ENCODE measurements at regions of chr10 and their contacts with region 1.

Region 1: DNA sequence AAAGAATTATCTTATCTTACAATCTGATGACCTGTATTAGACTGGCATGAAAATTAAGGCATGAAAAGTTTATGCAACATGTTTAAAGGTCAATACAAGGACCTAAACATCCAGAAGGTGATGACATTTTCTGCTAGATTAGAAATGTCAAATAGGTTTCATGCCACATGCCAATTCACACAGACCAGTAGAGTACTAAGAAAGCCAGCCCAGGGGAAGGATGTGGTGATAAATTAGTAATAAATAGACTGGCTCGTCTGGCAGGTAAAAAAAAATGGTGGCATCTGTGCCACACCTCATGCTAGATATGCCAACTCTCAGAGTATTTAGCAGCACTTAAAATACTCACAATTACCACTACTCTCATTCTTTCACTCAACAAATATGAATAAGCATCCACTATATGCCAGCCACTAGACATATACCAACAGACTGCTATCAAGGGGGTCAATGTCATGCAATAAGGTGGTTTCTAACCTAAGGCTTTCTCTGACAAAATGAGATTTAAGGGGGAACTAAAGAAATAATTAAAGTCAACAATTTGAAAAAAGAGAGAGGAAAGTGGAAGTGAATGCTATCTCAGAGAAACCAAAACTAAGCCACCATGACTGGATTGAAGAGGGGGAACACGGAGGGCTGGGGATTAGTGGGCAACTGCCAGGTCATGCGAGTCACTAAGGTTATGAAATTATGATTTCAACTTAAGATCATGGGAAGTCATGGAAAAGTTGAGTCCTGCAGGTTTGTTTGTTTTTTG is 83.5 kb downstream of the SGMS1 start:
- DNase-seq: peak; percentile 70
- H3K4me3 Mint-ChIP-seq: peak overlapping the region; percentile 57
- H3K27ac Mint-ChIP-seq: peak overlapping the region; percentile 89
- H3K4me1 Mint-ChIP-seq: peaks cover 86% of the 10 kb centered on the region
- H3K27me3 Mint-ChIP-seq: no peaks in the 10 kb centered on the region

Region 2: GRCh38 chr10:49538381-49539319 is 1001.6 kb before region 1 on chr10 and contains the start of gene ERCC6:
- CTCF ChIA-PET with region 1: no interaction called
- intact Hi-C with region 1: loop called (anchors 5 kb)
- DNase-seq: peak; percentile 97
- H3K4me3 Mint-ChIP-seq: peak within 1 kb of the TSS; percentile 90
- H3K27ac Mint-ChIP-seq: peak within 1 kb of the TSS; percentile 92
- H3K4me1 Mint-ChIP-seq: peaks cover 34% of the 10 kb centered on the region
- H3K27me3 Mint-ChIP-seq: peaks cover 14% of the 10 kb centered on the region
- total RNA-seq, gene ERCC6: 14.2 to 16.2 TPM

Region 3: DNA sequence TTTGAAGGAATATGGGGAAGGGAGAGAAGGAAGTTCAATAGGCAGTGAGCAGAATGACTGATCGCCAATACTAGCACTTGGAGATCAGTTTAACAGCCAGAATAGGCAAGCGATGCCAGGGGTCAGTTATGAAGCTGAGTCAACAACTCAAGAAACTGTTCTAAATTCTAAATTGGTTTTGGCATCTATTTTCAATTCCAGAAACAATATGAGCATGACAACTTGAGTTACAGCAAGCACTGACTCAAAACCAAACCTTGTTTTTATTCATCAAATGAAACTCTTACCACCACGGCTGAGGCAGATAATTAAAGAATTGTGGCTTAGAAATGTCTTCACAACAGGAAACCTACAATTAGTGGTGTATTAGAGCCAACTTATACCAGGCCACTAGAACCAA is 108.5 kb before region 1 on chr10:
- CTCF ChIA-PET with region 1: no interaction called
- intact Hi-C with region 1: loop called (anchors 1 kb)
- DNase-seq: peak; percentile 45
- H3K4me3 Mint-ChIP-seq: no peak overlapping the region
- H3K27ac Mint-ChIP-seq: peak overlapping the region; percentile 39
- H3K4me1 Mint-ChIP-seq: peaks cover 33% of the 10 kb centered on the region
- H3K27me3 Mint-ChIP-seq: no peaks in the 10 kb centered on the region

Region 4: GRCh38 chr10:50614444-50615137 is 74.3 kb after region 1 on chr10:
- CTCF ChIA-PET with region 1: no interaction called
- intact Hi-C with region 1: no loop called
- DNase-seq: peak; percentile 33
- H3K4me3 Mint-ChIP-seq: no peak overlapping the region
- H3K27ac Mint-ChIP-seq: no peak overlapping the region
- H3K4me1 Mint-ChIP-seq: peaks cover 56% of the 10 kb centered on the region
- H3K27me3 Mint-ChIP-seq: no peaks in the 10 kb centered on the region

Region 5: DNA sequence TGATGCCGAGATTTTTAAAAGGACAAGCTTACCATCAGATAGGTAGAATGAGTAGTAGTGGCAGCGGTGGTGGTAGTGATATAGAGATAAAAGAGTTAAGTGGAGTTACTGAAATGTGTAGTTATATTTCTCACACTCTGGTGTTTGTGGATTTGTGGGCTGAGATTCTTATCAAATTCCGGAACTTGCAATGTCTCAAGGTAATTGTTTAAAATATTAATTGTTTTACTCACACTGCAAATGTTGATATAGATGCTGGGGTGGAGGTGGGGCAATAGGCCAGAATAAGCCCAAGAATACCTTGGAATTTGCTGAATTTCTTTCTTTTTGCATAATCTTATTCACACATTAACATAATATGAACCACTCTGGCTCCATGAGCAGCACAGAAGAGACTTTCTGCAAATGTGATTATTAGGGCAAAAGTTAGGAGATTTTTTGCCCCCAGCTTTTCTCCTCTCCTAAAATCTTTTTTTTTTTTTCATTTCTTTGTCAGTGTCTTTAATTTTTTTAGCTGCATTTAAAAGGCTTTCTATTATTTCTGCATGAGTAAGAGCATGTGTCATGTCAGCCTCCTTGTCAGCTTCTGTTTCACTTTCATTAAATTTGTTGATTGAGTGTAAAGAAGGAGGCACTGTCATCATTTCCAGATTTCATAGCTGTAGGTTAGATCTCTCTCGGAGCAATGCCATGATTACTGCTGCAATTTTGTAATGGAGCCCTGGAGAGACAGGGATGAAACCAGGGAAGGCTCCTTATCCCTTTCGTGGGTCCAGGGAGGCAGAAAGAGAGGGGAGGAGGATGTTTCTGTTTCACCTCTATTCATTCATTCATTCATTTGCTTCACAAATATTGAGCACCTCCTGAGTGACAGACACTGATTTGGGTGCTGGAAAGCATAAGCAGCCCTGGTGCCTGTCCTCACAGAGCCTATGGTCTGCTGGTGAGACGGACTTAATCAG is 96.7 kb after region 1 on chr10:
- CTCF ChIA-PET with region 1: no interaction called
- intact Hi-C with region 1: loop called (anchors 1 kb)
- DNase-seq: peak; percentile 55
- H3K4me3 Mint-ChIP-seq: no peak overlapping the region
- H3K27ac Mint-ChIP-seq: peak overlapping the region; percentile 9
- H3K4me1 Mint-ChIP-seq: peaks cover 27% of the 10 kb centered on the region
- H3K27me3 Mint-ChIP-seq: peaks cover 4% of the 10 kb centered on the region

Region 6: DNA sequence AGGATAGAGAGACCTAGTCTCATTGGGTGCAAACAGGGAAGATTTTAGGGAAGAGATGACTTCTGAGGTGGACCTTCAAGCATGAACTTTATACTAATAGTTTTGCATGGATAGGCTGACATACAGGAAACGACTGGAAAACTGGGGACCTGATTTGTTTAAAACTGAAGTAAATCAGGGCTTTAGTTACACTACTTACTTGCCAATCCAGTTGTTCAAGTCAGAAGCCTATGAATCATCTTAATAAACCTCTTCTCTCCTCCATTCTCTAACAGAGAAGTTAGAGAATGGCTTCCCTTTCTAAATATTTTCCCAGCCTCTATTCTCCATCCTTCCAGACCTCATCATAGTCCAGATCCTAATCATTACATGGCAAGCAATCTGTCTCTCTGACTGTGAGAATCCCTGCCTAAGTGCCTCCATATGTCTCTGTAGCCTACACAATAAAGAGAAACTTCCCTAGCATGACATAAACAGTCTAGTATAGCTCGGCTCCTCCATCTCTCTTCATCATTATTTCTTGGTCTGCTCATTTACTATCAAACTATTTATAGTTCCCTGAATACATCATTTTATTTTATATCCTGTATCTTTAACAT is 589.8 kb after region 1 on chr10:
- CTCF ChIA-PET with region 1: no interaction called
- intact Hi-C with region 1: no loop called
- DNase-seq: no peak
- H3K4me3 Mint-ChIP-seq: no peak overlapping the region
- H3K27ac Mint-ChIP-seq: no peak overlapping the region
- H3K4me1 Mint-ChIP-seq: no peaks in the 10 kb centered on the region
- H3K27me3 Mint-ChIP-seq: no peaks in the 10 kb centered on the region

Region 7: DNA sequence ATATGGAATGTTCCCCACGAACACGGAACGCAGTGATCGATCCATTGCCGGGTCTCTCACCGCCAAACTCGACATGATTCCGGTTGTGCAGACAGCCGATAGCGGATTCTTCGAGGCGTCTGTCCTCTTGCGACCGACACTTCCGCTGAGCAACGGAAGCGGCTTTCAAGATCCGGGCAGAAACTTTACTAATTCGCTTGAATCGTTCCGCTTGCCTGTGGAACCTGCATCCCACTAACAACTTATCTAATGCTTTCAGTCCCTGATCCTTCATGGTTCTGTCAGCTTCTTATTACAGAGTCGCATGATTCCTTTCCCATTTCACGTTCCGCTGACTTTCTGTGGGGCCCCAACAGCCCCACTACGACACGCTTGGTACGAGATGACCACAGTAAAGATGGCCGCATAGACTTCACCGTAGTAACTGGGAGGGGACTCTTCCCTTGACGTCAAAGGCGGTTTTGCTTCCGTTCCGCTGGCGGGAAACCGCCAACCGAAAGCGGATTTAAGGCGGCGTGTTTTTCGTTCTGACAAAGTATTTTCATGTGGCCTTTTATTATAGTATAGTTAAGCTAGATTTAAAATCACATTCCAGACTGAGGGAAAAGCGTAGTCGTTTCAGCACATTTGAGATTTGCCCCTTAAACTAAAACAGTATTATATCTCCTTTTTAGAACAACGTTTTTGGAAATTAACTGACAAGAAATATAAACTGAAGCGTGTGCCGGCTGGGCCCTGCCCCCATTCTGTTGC is 1159.4 kb after region 1 on chr10 and contains the start of gene CSTF2T:
- CTCF ChIA-PET with region 1: no interaction called
- intact Hi-C with region 1: loop called (anchors 10 kb)
- DNase-seq: peak; percentile 94
- H3K4me3 Mint-ChIP-seq: peak within 1 kb of the TSS; percentile 97
- H3K27ac Mint-ChIP-seq: peak within 1 kb of the TSS; percentile 100
- H3K4me1 Mint-ChIP-seq: peaks cover 45% of the 10 kb centered on the region
- H3K27me3 Mint-ChIP-seq: no peaks in the 10 kb centered on the region
- total RNA-seq, gene CSTF2T: 25.3 to 25.6 TPM

Measured in activated naive CD4-positive, alpha-beta T cell treated with anti-CD3 and anti-CD28 coated beads for 36 hours (primary cell).